Activated CD8-positive, alpha-beta T cell treated with anti-CD3 and anti-CD28 coated beads for 36 hours (primary cell): ENCODE measurements at regions of chr3 and their contacts with region 1.

Region 1: DNA sequence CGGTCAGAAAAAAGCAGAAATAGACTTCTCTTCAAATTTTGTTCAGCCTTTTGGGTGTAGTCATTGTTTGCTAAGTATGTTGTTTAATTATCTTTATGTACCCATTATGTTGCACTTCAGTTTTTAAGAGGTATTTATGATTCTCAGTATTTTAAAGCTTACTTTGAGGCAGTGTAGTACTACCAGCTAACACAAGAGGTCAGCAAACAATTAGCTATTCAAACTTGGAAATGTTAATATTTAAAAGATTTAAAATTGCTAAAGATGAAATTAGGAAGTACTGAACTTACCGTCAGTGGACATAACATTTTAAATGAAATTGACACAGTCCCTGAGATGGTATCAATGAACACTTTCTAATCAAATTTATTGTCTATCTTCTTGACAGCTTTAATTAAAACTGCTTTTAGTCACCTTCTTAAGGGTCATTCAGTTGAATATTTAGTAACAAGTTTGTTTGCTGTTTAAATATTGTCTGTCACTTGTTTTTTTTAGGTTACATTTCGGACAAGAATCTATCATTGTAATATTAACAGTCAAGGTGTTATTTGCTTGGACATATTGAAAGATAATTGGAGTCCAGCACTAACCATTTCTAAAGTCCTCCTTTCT is 28.1 kb downstream of the NKIRAS1 start:
- DNase-seq: no peak
- ATAC-seq: no peak
- H3K4me3 Mint-ChIP-seq: no peak overlapping the region
- H3K27ac Mint-ChIP-seq: no peak overlapping the region
- H3K4me1 Mint-ChIP-seq: no peaks in the 10 kb centered on the region
- H3K27me3 Mint-ChIP-seq: no peaks in the 10 kb centered on the region
- CTCF ChIP-seq: peak; percentile 73

Region 2: GRCh38 chr3:23834082-23834870 is 54.4 kb before region 1 on chr3:
- CTCF ChIA-PET with region 1: interaction called, 15 read pairs
- POLR2A ChIA-PET with region 1: no interaction called
- intact Hi-C with region 1: no loop called
- DNase-seq: no peak
- ATAC-seq: no peak
- H3K4me3 Mint-ChIP-seq: no peak overlapping the region
- H3K27ac Mint-ChIP-seq: no peak overlapping the region
- H3K4me1 Mint-ChIP-seq: peaks cover 50% of the 10 kb centered on the region
- H3K27me3 Mint-ChIP-seq: no peaks in the 10 kb centered on the region
- CTCF ChIP-seq: no peak

Region 3: GRCh38 chr3:23932571-23932970 is 43.8 kb after region 1 on chr3:
- CTCF ChIA-PET with region 1: no interaction called
- POLR2A ChIA-PET with region 1: no interaction called
- intact Hi-C with region 1: no loop called
- DNase-seq: no peak
- ATAC-seq: no peak
- H3K4me3 Mint-ChIP-seq: no peak overlapping the region
- H3K27ac Mint-ChIP-seq: no peak overlapping the region
- H3K4me1 Mint-ChIP-seq: peaks cover 2% of the 10 kb centered on the region
- H3K27me3 Mint-ChIP-seq: no peaks in the 10 kb centered on the region
- CTCF ChIP-seq: no peak